ENCODE measurements at regions of chr13 and their contacts with region 1.

Region 1: GRCh38 chr13:41193919-41194824 is at the start of gene KBTBD7:
- DNase-seq: peak; percentile 99
- H3K4me3 ChIP-seq: peak within 1 kb of the TSS; percentile 48 to 60 (median 53)
- H3K27ac ChIP-seq: peak within 1 kb of the TSS; percentile 78
- H3K4me1 ChIP-seq: peaks cover 4% of the 10 kb centered on the region
- H3K27me3 ChIP-seq: no peaks in the 10 kb centered on the region
- CTCF ChIP-seq: no peak
- POLR2A ChIP-seq: peak; percentile 80
- total RNA-seq, gene KBTBD7: 3.1 and 4.4 TPM in 2 replicates

Region 2: GRCh38 chr13:40536443-40537113 is 657.6 kb before region 1 on chr13:
- CTCF ChIA-PET with region 1: no interaction called
- POLR2A ChIA-PET with region 1: no interaction called
- dilution Hi-C with region 1: no loop called
- intact Hi-C with region 1: no loop called
- DNase-seq: peak; percentile 45
- H3K4me3 ChIP-seq: no peak overlapping the region
- H3K27ac ChIP-seq: no peak overlapping the region
- H3K4me1 ChIP-seq: peaks cover 18% of the 10 kb centered on the region
- H3K27me3 ChIP-seq: no peaks in the 10 kb centered on the region
- CTCF ChIP-seq: no peak
- POLR2A ChIP-seq: no peak

Region 3: DNA sequence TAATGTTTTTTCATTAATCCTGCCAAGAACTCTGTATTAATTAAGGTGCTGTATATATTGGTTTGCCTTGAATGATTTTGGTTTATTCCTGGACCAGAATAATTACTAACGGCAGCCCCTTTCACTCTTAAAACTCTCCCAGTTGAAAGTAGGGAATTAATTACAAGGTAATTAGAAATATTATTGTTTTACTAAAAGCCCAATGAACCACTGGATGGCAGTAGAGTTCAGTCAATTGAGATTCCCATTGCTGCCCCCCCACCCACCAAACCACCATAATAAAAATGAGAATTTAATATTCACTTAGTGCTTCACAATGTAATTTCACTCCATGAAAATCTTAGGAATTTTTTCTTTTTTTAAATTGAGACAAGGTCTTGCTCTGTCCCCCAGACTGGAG is 119.1 kb before region 1 on chr13:
- CTCF ChIA-PET with region 1: interaction called, 6 read pairs
- POLR2A ChIA-PET with region 1: no interaction called
- dilution Hi-C with region 1: no loop called
- intact Hi-C with region 1: loop called (anchors 10 kb)
- DNase-seq: peak; percentile 51
- H3K4me3 ChIP-seq: no peak overlapping the region
- H3K27ac ChIP-seq: peak overlapping the region; percentile 2
- H3K4me1 ChIP-seq: peaks cover 9% of the 10 kb centered on the region
- H3K27me3 ChIP-seq: no peaks in the 10 kb centered on the region
- CTCF ChIP-seq: peak; percentile 31 to 33
- POLR2A ChIP-seq: no peak

Region 4: GRCh38 chr13:41263261-41264027 is 69.3 kb after region 1 on chr13 and contains the start of gene MTRF1:
- CTCF ChIA-PET with region 1: no interaction called
- POLR2A ChIA-PET with region 1: no interaction called
- dilution Hi-C with region 1: no loop called
- intact Hi-C with region 1: loop called (anchors 2 kb)
- DNase-seq: peak; percentile 86
- H3K4me3 ChIP-seq: peak within 1 kb of the TSS; percentile 56 to 98 (median 86)
- H3K27ac ChIP-seq: peak within 1 kb of the TSS; percentile 70
- H3K4me1 ChIP-seq: peaks cover 8% of the 10 kb centered on the region
- H3K27me3 ChIP-seq: no peaks in the 10 kb centered on the region
- CTCF ChIP-seq: no peak
- POLR2A ChIP-seq: peak; percentile 85
- total RNA-seq, gene MTRF1: 13.3 and 16.3 TPM in 2 replicates

Measured in endothelial cell of umbilical vein (primary cell).